ENCODE measurements at regions of chr7 and their contacts with region 1.

Region 1: DNA sequence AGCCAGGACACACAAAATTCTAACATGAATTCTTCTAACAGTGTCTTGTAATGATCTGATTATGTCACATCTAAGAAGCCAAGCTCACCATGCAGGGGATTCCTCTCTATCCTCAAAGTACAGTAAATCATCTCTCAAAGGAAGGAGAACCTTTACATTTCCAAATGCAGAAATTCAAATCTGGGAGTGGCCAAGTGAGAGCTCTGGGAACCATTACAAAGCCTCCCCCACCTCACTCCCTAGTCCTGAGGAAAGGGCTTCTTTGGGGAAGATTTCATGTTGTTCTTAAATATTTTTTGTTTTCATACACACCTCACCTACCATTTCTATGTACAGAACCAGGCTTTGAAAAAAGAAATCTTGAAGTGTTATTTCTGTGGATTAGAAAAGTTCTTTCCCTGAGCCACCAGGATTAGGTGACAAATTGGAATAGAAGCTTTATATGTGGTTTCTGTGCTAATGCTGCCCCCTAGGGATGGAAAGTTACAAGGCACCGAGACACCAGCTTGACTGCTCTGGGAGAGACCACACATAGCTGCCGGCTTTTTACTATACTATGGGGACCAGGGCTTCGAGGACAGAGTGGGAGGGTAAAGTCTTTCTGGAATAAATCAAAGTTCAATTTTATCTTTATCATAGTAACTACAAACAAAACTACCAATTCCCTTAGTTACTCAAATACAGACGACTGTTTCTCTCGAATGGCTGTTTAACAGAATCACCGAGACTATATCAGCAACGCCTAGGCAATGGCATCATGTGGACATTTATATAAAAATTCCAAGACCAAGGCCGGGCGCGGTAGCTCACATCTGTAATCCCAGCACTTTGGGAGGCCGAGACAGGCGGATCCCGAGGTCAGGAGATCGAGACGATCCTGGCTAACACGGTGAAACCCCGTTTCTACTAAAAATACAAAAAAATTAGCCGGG is 116.1 kb downstream of the RNF216 start:
- DNase-seq: peak; percentile 82
- ATAC-seq: peak; percentile 84
- H3K4me3 Mint-ChIP-seq: no peak overlapping the region
- H3K27ac Mint-ChIP-seq: peak overlapping the region; percentile 84
- H3K4me1 Mint-ChIP-seq: peaks cover 29% of the 10 kb centered on the region
- H3K27me3 Mint-ChIP-seq: no peaks in the 10 kb centered on the region
- CTCF ChIP-seq: peak; percentile 78

Region 2: GRCh38 chr7:5450549-5451372 is 214.6 kb before region 1 on chr7:
- CTCF ChIA-PET with region 1: interaction called, 11 read pairs
- POLR2A ChIA-PET with region 1: no interaction called
- DNase-seq: peak; percentile 79
- ATAC-seq: peak; percentile 84
- H3K4me3 Mint-ChIP-seq: no peak overlapping the region
- H3K27ac Mint-ChIP-seq: no peak overlapping the region
- H3K4me1 Mint-ChIP-seq: peaks cover 6% of the 10 kb centered on the region
- H3K27me3 Mint-ChIP-seq: peaks cover 3% of the 10 kb centered on the region; the same call in 1 of the 2 replicates
- CTCF ChIP-seq: peak; percentile 56

Region 3: DNA sequence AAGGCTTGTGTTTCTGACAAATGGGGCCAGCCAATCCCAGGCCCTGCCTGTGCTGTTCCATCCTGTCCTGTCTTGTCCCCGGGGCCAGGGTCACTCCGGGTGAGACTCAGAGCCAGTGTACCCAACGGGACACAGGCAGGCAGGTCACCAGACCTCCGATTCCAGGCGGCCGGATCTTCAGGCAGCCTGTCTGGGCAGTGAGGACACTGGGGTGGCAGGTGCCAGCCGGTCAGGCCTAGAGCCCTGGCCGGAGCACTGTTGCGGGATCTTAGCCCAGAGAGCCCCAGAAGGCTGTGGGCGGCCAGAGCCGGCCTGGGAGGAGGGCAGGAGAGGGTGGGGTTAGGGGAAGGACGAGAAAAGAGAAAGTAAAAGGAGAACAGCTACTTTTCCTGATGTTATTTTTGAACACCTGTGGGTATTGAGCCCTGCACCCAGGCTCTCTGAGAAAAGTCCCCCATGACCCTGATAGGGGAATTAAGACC is 107.4 kb before region 1 on chr7:
- CTCF ChIA-PET with region 1: interaction called, 43 read pairs
- POLR2A ChIA-PET with region 1: interaction called, 3 read pairs
- DNase-seq: no peak
- ATAC-seq: no peak
- H3K4me3 Mint-ChIP-seq: peak overlapping the region; percentile 63; the same call in 1 of the 2 replicates
- H3K27ac Mint-ChIP-seq: peak overlapping the region; percentile 87; the same call in 1 of the 2 replicates
- H3K4me1 Mint-ChIP-seq: peaks cover 25% of the 10 kb centered on the region
- H3K27me3 Mint-ChIP-seq: no peaks in the 10 kb centered on the region
- CTCF ChIP-seq: no peak

Region 4: DNA sequence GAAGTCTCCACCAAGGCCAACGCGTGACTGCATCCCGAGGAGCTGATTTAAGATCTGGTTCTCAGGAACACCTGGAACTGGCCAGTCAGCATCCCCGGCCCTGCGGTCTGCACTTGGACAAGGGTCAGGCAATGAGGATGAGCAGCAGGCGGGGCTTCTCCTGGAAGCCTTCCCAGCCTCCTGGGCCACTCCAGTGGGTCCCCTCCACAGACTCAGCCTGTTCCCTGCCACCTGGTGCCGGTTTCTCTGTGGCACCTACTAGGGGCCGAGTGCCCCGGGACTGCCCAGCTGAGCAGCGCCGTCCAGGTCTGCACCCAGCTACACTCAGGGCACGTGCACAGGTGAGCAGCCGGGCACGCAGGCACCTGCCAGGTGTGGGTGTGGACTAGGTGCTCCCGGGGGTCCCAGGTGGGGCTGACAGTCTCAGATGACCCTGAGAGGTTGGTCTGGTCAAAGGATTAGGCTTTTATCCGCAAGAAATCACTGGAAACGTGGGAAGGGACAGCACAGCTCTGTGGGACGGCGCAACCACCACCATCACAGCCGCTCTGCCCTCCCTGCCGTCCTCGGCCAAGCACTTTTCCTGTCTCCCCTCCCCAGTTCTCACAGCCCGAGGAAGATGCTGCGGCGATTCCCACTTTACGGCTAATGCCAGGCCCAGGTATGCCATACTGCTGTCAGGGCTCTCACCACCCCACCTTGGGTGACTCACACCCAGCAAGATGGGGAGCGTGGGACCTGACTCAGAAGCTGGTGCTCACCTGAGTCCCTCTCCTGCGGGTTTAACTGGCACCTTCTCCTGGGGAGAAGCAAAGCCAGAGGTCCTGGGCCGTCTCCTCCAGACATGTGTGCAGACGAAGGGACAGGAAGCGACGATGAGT is 49.9 kb before region 1 on chr7:
- CTCF ChIA-PET with region 1: interaction called, 18 read pairs
- POLR2A ChIA-PET with region 1: interaction called, 6 read pairs
- DNase-seq: no peak
- ATAC-seq: no peak
- H3K4me3 Mint-ChIP-seq: no peak overlapping the region
- H3K27ac Mint-ChIP-seq: no peak overlapping the region
- H3K4me1 Mint-ChIP-seq: peaks cover 3% of the 10 kb centered on the region; the same call in 1 of the 2 replicates
- H3K27me3 Mint-ChIP-seq: no peaks in the 10 kb centered on the region; the same call in 1 of the 2 replicates
- CTCF ChIP-seq: no peak

Region 5: GRCh38 chr7:5636914-5637313 is 28.4 kb before region 1 on chr7:
- CTCF ChIA-PET with region 1: interaction called, 30 read pairs
- POLR2A ChIA-PET with region 1: interaction called, 4 read pairs
- DNase-seq: no peak
- ATAC-seq: peak; percentile 9; the same call in 1 of the 2 replicates
- H3K4me3 Mint-ChIP-seq: peak overlapping the region; percentile 6; the same call in 1 of the 2 replicates
- H3K27ac Mint-ChIP-seq: peak overlapping the region; percentile 83
- H3K4me1 Mint-ChIP-seq: peaks cover 57% of the 10 kb centered on the region
- H3K27me3 Mint-ChIP-seq: no peaks in the 10 kb centered on the region
- CTCF ChIP-seq: no peak

Region 6: GRCh38 chr7:5653661-5654060 is 11.7 kb before region 1 on chr7:
- CTCF ChIA-PET with region 1: interaction called, 15 read pairs
- POLR2A ChIA-PET with region 1: interaction called, 4 read pairs
- DNase-seq: no peak
- ATAC-seq: no peak
- H3K4me3 Mint-ChIP-seq: no peak overlapping the region
- H3K27ac Mint-ChIP-seq: peak overlapping the region; percentile 4
- H3K4me1 Mint-ChIP-seq: peaks cover 18% of the 10 kb centered on the region
- H3K27me3 Mint-ChIP-seq: no peaks in the 10 kb centered on the region
- CTCF ChIP-seq: no peak

Region 7: DNA sequence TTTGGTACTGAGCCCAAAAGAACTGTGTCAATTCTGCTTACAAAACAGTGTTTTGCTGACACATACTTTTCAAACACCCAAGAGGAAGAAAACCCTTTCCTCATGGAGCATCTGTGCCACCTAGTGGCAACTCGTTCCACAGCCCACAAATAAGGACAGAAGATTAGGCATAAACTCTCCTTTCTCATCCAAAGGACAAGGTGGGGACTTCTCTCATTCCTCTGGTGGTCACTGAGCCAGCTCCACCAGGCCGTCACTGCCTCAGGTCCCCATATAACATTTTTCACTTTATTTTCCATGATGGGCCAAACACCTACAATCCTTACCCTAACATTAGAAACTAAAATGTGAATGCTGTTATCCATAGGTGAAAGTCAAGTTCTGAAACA is 39.2 kb after region 1 on chr7:
- CTCF ChIA-PET with region 1: interaction called, 14 read pairs
- POLR2A ChIA-PET with region 1: no interaction called
- DNase-seq: peak; percentile 75
- ATAC-seq: peak; percentile 85
- H3K4me3 Mint-ChIP-seq: no peak overlapping the region
- H3K27ac Mint-ChIP-seq: peak overlapping the region; percentile 60; the same call in 1 of the 2 replicates
- H3K4me1 Mint-ChIP-seq: peaks cover 6% of the 10 kb centered on the region
- H3K27me3 Mint-ChIP-seq: no peaks in the 10 kb centered on the region
- CTCF ChIP-seq: peak; percentile 64; the same call in 1 of the 2 replicates